B cell (primary cell): ENCODE measurements at regions of chr17 and their contacts with region 1.

Region 1: DNA sequence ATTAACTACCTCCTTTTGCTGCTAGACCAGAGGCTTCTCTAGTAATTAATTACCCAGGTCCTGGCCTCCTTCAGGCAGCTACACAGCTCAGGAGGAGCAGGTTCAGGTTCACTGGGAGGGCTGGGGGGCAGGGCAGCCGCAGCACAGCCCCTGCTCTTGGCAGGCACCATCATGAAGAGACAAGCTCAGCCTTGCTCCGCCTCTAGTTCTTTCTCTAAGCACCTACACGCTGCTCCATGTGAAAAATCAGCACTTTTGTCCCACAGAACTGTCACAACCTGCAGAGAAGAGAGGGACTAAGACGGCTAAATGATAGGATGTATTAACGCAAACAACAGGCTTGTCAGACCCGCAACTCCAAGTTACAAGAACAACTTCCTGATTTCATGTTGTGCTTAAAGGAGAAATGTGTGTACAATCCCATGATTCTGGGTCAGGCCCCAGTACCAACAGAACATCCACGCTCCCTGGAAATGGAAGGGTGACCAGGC is 53.4 kb downstream of the GRB2 start:
- DNase-seq: no peak
- ATAC-seq: no peak
- H3K4me3 ChIP-seq: no peak overlapping the region
- H3K4me3 Mint-ChIP-seq: peak overlapping the region; percentile 63
- H3K27ac ChIP-seq: peak overlapping the region; percentile 25 to 76
- H3K27ac Mint-ChIP-seq: peak overlapping the region; percentile 90
- H3K4me1 ChIP-seq: peaks cover 74 to 85% of the 10 kb centered on the region in 2 donors
- H3K4me1 Mint-ChIP-seq: peaks cover 80% of the 10 kb centered on the region
- H3K27me3 ChIP-seq: no peaks in the 10 kb centered on the region
- H3K27me3 Mint-ChIP-seq: no peaks in the 10 kb centered on the region
- CTCF ChIP-seq: no peak

Region 2: GRCh38 chr17:75159191-75160031 is 192.7 kb before region 1 on chr17:
- CTCF ChIA-PET with region 1: no interaction called
- POLR2A ChIA-PET with region 1: no interaction called
- intact Hi-C with region 1: no loop called
- DNase-seq: no peak
- ATAC-seq: no peak
- H3K4me3 ChIP-seq: no peak overlapping the region
- H3K4me3 Mint-ChIP-seq: no peak overlapping the region
- H3K27ac ChIP-seq: no peak overlapping the region
- H3K27ac Mint-ChIP-seq: no peak overlapping the region
- H3K4me1 ChIP-seq: peaks cover 6 to 14% of the 10 kb centered on the region in 2 donors
- H3K4me1 Mint-ChIP-seq: peaks cover 8% of the 10 kb centered on the region
- H3K27me3 ChIP-seq: no peaks in the 10 kb centered on the region
- H3K27me3 Mint-ChIP-seq: no peaks in the 10 kb centered on the region
- CTCF ChIP-seq: no peak

Region 3: DNA sequence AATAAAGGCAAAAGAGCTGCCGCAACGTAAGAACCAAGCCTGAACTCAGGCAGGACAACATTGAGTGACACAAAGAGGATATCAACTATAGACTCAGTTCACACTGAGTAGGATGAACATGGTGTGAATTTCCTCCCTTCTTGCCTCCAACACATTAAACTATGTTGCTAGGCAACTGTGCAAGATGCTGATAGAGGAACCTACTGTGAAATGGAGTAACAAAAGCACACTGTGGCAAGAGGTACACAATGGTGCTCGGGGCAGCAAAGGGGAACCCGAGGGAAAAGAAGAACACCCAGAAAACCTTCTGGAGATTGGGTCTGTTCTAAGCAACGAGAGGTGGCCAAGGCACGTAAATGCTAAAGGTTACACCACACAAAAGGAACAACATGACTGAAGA is 19.2 kb after region 1 on chr17:
- CTCF ChIA-PET with region 1: interaction called, 6 read pairs
- POLR2A ChIA-PET with region 1: no interaction called
- intact Hi-C with region 1: loop called (anchors 2 kb)
- DNase-seq: peak; percentile 73
- ATAC-seq: peak; percentile 62
- H3K4me3 ChIP-seq: peak overlapping the region in 1 of 5 experiments; percentile 3
- H3K4me3 Mint-ChIP-seq: peak overlapping the region; percentile 74
- H3K27ac ChIP-seq: peak overlapping the region; percentile 42 to 76
- H3K27ac Mint-ChIP-seq: peak overlapping the region; percentile 84
- H3K4me1 ChIP-seq: peaks cover 64 to 85% of the 10 kb centered on the region in 2 donors
- H3K4me1 Mint-ChIP-seq: peaks cover 80% of the 10 kb centered on the region
- H3K27me3 ChIP-seq: no peaks in the 10 kb centered on the region
- H3K27me3 Mint-ChIP-seq: no peaks in the 10 kb centered on the region
- CTCF ChIP-seq: no peak